Activated CD4-positive, alpha-beta memory T cell treated with anti-CD3 and anti-CD28 coated beads, Interleukin-2, amount 10 ng/mL, durations not matched to agents 7 days and 5 days (primary cell): ENCODE measurements at regions of chr1 and their contacts with region 1.

Region 1: GRCh38 chr1:239587066-239587465 is 200.7 kb downstream of the CHRM3 start:
- DNase-seq: peak; percentile 49
- H3K4me3 Mint-ChIP-seq: no peak overlapping the region
- H3K27ac Mint-ChIP-seq: peak overlapping the region; percentile 7
- H3K4me1 Mint-ChIP-seq: peaks cover 9% of the 10 kb centered on the region
- H3K27me3 Mint-ChIP-seq: no peaks in the 10 kb centered on the region

Region 2: DNA sequence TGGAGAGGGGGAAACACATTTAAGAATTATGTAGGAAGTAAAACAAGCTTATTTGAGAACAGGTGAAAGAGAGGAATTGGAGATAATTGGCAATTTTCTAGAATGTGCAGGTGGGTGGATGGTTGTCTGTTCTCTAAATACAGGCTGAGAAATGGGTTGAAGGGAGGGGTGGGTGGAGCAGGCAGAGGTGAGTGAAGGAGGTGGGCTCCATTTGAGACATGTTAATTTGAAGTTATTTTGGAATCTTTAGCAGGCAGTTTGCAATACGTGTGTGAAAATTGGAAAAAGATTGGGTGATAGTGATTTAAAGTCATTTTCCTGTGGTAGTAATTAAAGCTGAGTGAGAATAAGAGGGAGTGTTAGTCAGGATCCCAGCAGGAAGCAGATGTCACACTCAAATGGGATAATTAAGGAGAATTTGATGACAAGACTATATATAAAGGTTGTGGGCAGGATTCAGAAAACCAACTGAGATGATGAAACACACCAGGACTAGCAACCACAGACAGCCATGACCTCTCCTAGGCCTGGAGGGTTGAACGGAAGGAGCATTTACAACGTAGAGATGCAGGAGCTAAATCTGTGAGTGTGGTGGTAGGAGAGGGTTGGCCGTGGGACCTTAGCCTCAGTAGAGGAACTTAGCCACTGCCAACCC is 160.1 kb before region 1 on chr1:
- CTCF ChIA-PET with region 1: no interaction called
- POLR2A ChIA-PET with region 1: no interaction called
- DNase-seq: no peak
- H3K4me3 Mint-ChIP-seq: no peak overlapping the region
- H3K27ac Mint-ChIP-seq: no peak overlapping the region
- H3K4me1 Mint-ChIP-seq: no peaks in the 10 kb centered on the region
- H3K27me3 Mint-ChIP-seq: no peaks in the 10 kb centered on the region

Region 3: DNA sequence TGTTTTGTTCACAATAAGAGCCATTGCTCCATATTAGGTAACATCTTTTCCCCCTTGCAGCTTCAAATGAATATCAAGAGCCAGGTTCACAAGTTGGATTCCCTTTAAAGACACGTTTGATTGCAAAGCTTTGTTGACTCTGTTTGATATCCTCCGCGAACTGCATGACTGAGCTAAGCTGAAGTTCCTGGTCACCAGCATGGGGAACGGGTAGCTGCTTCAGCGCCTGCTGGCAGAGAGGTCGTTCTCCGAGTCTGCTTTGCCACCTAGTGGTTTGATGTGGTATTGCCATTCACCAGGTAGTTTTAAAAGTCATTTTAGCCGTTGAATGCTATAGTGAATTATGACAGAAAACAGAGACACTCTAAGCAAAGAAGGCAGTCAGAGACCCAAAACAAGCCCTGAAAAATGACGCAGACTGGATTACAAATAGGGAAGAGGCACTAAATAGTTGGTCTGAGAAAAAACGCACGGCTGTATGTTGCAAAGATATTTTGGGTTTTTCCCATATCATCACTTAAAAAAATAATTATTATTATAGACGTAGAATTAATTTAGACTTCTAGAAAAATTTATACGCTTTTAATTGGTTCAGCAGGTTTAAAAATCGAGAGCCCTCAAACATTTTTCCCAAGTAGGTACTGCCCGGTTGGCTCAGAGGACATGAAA is 311.1 kb after region 1 on chr1:
- CTCF ChIA-PET with region 1: interaction called, 15 read pairs
- POLR2A ChIA-PET with region 1: no interaction called
- DNase-seq: peak; percentile 74
- H3K4me3 Mint-ChIP-seq: no peak overlapping the region
- H3K27ac Mint-ChIP-seq: no peak overlapping the region
- H3K4me1 Mint-ChIP-seq: peaks cover 6% of the 10 kb centered on the region
- H3K27me3 Mint-ChIP-seq: peaks cover 10% of the 10 kb centered on the region